Uterus (tissue), 4 donors: ENCODE measurements at regions of chr11 and their contacts with region 1.

Region 1: DNA sequence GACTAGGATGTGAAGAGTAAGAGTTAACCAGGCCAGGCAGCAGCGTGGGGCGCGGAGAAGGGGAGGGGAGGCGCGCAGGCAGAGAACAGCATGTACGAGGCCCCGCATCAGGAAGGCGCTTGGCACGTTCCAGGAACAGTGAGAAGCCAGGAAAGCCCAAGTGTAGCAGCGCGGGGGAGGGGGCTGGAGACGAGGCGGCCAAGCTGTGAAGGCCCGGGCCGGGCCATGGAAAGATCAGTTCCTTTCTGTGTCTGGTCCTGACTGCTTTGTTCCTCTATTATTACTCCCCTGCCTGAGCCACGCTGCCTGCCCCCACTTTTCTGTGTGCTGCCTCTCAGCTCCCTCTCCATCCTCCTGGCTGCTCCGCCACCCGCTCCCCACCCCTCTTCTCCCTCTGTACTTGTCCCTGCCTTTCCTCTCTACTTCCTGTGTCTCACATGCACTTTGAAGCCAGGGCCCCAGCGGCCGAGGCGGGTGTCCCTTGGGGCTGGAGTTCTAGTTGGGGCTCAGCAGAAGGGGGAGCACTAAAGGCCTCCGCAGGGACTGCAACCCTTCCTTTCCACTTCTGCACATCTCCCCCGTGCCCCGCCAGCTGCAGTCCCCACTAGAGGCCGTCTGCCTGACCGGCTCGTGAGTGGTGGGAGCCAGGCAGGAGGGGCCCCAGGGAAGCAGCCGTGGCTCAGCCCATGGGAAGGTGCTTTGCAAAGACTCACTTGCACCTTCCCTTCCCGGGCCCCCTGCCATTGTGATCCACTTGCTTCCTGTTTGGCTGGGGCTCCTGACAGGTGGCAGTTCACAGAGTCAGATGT is 63.7 kb downstream of the PRDM11 start:
- DNase-seq: peak; percentile 96 to 98
- H3K4me3 ChIP-seq: peak overlapping the region in 1 of 2 donors; percentile 1
- H3K27ac ChIP-seq: peak overlapping the region; percentile 86 to 97
- H3K4me1 ChIP-seq: peaks cover 0 to 20% of the 10 kb centered on the region in 2 donors
- H3K27me3 ChIP-seq: no peaks in the 10 kb centered on the region
- CTCF ChIP-seq: peak in 2 of 4 experiments; percentile 3 to 14
- POLR2A ChIP-seq: peak in 1 of 2 donors; percentile 35

Region 2: GRCh38 chr11:44865866-44866272 is 344.2 kb before region 1 on chr11:
- intact Hi-C with region 1: no loop called
- DNase-seq: no peak
- H3K4me3 ChIP-seq: no peak overlapping the region
- H3K27ac ChIP-seq: peak overlapping the region in 1 of 2 donors; percentile 65
- H3K4me1 ChIP-seq: peaks cover 0 to 13% of the 10 kb centered on the region in 2 donors
- H3K27me3 ChIP-seq: no peaks in the 10 kb centered on the region
- CTCF ChIP-seq: peak in 1 of 4 experiments; percentile 15
- POLR2A ChIP-seq: no peak

Region 3: GRCh38 chr11:45025716-45026492 is 184.2 kb before region 1 on chr11:
- intact Hi-C with region 1: no loop called
- DNase-seq: peak in 1 of 2 donors; percentile 37
- H3K4me3 ChIP-seq: no peak overlapping the region
- H3K27ac ChIP-seq: peak overlapping the region in 1 of 2 donors; percentile 35
- H3K4me1 ChIP-seq: peaks cover 0 to 4% of the 10 kb centered on the region in 2 donors
- H3K27me3 ChIP-seq: no peaks in the 10 kb centered on the region
- CTCF ChIP-seq: no peak
- POLR2A ChIP-seq: no peak

Region 4: GRCh38 chr11:45045683-45046471 is 164.2 kb before region 1 on chr11:
- intact Hi-C with region 1: no loop called
- DNase-seq: peak; percentile 35 to 38
- H3K4me3 ChIP-seq: no peak overlapping the region
- H3K27ac ChIP-seq: peak overlapping the region in 1 of 2 donors; percentile 17
- H3K4me1 ChIP-seq: no peaks in the 10 kb centered on the region
- H3K27me3 ChIP-seq: no peaks in the 10 kb centered on the region
- CTCF ChIP-seq: no peak
- POLR2A ChIP-seq: no peak

Region 5: GRCh38 chr11:45097721-45098493 is 112.2 kb before region 1 on chr11:
- intact Hi-C with region 1: no loop called
- DNase-seq: peak; percentile 39 to 63
- H3K4me3 ChIP-seq: no peak overlapping the region
- H3K27ac ChIP-seq: no peak overlapping the region
- H3K4me1 ChIP-seq: no peaks in the 10 kb centered on the region
- H3K27me3 ChIP-seq: no peaks in the 10 kb centered on the region
- CTCF ChIP-seq: peak in 1 of 4 experiments; percentile 27
- POLR2A ChIP-seq: no peak

Region 6: DNA sequence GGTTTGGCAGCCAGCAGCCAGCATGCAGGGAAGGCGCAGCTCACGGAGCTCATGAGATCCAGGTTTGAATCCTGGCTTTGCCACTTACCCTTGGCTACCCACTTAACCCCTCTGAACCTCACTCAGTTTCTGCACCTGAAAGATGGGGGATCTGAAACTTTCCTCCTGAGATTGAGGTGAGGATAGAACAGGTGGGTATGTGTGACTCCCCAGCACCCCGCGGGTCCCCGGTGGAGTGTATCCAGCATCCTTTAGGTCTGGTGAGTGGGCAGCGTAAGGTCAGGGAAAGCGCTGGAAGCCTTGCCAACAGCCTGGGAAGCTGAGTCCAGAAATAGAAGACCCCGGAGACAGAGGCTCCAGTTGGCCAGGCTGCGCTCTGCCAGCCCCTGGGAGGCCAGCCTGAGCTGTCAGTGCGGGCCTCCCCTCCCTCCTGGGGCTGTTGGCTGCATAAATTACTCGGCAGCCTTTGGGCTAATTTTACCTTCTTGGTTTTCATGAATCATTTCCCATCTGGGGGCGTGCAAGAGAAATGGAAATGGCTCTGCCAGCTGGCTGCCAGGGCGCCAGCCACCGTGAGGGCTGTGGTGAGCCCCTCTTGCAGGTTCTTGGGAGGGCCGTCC is 46.0 kb before region 1 on chr11:
- intact Hi-C with region 1: loop called (anchors 10 kb)
- DNase-seq: peak in 1 of 2 donors; percentile 41
- H3K4me3 ChIP-seq: no peak overlapping the region
- H3K27ac ChIP-seq: peak overlapping the region in 1 of 2 donors; percentile 1
- H3K4me1 ChIP-seq: peaks cover 0 to 15% of the 10 kb centered on the region in 2 donors
- H3K27me3 ChIP-seq: no peaks in the 10 kb centered on the region
- CTCF ChIP-seq: no peak
- POLR2A ChIP-seq: no peak